ENCODE measurements at regions of chr11 and their contacts with region 1.

Region 1: GRCh38 chr11:10540923-10541560 is at the start of gene RNF141:
- DNase-seq: peak; percentile 96
- ATAC-seq: peak; percentile 97
- H3K4me3 Mint-ChIP-seq: peak within 1 kb of the TSS; percentile 90
- H3K27ac Mint-ChIP-seq: peak within 1 kb of the TSS; percentile 79
- H3K4me1 Mint-ChIP-seq: peaks cover 22% of the 10 kb centered on the region
- H3K27me3 Mint-ChIP-seq: peaks cover 4% of the 10 kb centered on the region
- total RNA-seq, gene RNF141: 10.7 to 11.6 TPM

Region 2: GRCh38 chr11:10322830-10323792 is 217.9 kb before region 1 on chr11:
- CTCF ChIA-PET with region 1: no interaction called
- POLR2A ChIA-PET with region 1: no interaction called
- DNase-seq: peak; percentile 50
- ATAC-seq: peak; percentile 71
- H3K4me3 Mint-ChIP-seq: no peak overlapping the region
- H3K27ac Mint-ChIP-seq: no peak overlapping the region
- H3K4me1 Mint-ChIP-seq: peaks cover 6% of the 10 kb centered on the region
- H3K27me3 Mint-ChIP-seq: peaks cover 8% of the 10 kb centered on the region

Region 3: DNA sequence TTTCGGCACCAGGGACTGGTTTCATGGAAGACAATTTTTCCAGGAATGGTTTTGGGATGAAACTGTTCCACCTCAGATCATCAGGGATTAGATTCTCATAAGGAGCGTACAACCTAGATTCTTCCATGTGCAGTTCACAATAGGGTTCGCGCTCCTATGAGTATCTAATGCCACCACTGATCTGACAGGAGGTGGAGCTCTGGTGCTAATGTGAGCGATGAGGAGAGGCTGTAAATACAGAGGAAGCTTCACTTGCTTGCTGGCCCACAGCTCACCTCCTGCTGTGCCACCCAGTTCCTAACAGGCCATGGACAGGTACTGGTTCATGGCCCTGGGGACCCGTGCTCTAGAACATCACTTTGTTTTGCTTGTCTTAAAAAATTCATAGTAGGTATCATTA is 127.8 kb before region 1 on chr11:
- CTCF ChIA-PET with region 1: interaction called, 67 read pairs
- POLR2A ChIA-PET with region 1: interaction called, 5 read pairs
- DNase-seq: peak; percentile 81
- ATAC-seq: peak; percentile 91
- H3K4me3 Mint-ChIP-seq: no peak overlapping the region
- H3K27ac Mint-ChIP-seq: no peak overlapping the region
- H3K4me1 Mint-ChIP-seq: peaks cover 41% of the 10 kb centered on the region
- H3K27me3 Mint-ChIP-seq: peaks cover 12% of the 10 kb centered on the region

Region 4: DNA sequence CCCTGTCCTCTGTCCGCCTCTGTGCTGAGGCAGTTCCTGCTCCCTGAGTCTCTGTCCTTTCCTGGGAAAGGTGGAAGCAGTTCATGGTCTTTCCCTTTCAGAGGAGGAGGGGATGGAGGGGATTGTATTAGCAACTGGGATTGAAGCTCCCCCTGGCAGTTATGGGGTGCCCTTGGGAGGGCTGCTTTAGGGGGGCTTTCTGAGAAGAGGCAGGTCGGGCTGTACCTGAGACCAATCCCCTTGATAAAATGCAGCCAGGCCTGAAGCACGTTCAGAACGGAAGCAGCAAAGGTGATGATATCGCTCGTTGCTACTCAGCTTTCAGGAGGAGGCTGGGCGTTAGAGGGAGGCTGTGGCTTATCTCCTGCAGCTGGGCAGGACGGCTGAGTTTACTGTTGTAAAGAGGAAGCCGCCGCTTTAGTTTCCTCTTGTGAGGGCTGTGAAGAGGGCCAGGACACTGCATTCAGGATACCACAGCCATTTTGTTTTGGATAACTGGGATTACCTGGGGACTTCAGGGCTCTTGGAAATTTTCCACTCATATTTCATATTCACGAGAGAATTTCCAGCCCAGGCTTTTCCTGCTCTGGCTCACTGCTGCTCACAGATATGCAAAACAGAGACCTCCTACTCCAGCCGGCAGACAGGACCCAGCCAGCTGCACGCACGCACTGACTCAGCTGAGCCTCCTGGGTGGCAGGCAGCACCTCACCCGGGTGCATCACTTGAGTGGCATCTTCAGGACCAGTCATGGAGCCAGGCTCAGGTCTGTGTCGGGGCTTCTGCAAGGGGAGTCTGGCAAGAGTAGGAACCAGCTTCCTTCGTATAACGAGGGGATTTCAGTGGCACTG is 85.2 kb before region 1 on chr11:
- CTCF ChIA-PET with region 1: interaction called, 59 read pairs
- POLR2A ChIA-PET with region 1: interaction called, 29 read pairs
- DNase-seq: peak; percentile 88
- ATAC-seq: peak; percentile 83
- H3K4me3 Mint-ChIP-seq: peak overlapping the region; percentile 85
- H3K27ac Mint-ChIP-seq: peak overlapping the region; percentile 92
- H3K4me1 Mint-ChIP-seq: peaks cover 67% of the 10 kb centered on the region
- H3K27me3 Mint-ChIP-seq: peaks cover 17% of the 10 kb centered on the region

Region 5: DNA sequence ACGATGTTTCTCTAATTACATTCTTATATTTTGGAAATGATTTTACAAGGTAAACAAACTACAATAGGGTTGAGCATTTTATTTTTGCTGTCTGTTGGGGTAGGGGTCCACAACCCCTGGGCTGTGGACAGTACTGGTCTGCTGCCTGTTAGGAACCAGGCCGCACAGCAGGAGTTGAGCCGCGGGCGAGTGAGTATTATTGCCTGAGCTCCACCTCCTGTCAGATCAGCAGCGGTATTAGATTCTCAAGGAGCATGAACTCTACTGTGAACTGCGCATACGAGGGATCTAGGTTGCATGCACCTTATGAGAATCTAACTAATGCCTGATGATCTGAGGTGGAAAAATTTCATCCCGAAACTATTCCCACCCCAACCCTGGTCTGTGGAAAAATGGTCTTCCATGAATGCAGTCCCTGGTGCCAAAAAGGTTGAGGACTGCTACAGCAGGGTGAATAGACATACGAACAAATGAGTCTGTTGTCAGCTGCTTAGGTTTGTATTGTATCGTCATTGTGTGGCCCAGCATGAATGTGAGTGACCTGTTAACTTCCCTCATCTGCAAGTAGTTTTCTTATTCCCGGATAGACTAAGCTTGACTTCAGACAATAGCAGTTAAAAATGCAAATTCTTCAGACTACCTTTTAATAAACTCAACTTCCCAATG is 29.9 kb before region 1 on chr11:
- CTCF ChIA-PET with region 1: interaction called, 18 read pairs
- POLR2A ChIA-PET with region 1: no interaction called
- DNase-seq: no peak
- ATAC-seq: no peak
- H3K4me3 Mint-ChIP-seq: no peak overlapping the region
- H3K27ac Mint-ChIP-seq: no peak overlapping the region
- H3K4me1 Mint-ChIP-seq: peaks cover 10% of the 10 kb centered on the region
- H3K27me3 Mint-ChIP-seq: no peaks in the 10 kb centered on the region

Region 6: GRCh38 chr11:10526974-10527918 is 13.8 kb before region 1 on chr11:
- CTCF ChIA-PET with region 1: interaction called, 45 read pairs
- POLR2A ChIA-PET with region 1: interaction called, 4 read pairs
- DNase-seq: no peak
- ATAC-seq: peak; percentile 49
- H3K4me3 Mint-ChIP-seq: no peak overlapping the region
- H3K27ac Mint-ChIP-seq: no peak overlapping the region
- H3K4me1 Mint-ChIP-seq: peaks cover 11% of the 10 kb centered on the region
- H3K27me3 Mint-ChIP-seq: no peaks in the 10 kb centered on the region

Region 7: DNA sequence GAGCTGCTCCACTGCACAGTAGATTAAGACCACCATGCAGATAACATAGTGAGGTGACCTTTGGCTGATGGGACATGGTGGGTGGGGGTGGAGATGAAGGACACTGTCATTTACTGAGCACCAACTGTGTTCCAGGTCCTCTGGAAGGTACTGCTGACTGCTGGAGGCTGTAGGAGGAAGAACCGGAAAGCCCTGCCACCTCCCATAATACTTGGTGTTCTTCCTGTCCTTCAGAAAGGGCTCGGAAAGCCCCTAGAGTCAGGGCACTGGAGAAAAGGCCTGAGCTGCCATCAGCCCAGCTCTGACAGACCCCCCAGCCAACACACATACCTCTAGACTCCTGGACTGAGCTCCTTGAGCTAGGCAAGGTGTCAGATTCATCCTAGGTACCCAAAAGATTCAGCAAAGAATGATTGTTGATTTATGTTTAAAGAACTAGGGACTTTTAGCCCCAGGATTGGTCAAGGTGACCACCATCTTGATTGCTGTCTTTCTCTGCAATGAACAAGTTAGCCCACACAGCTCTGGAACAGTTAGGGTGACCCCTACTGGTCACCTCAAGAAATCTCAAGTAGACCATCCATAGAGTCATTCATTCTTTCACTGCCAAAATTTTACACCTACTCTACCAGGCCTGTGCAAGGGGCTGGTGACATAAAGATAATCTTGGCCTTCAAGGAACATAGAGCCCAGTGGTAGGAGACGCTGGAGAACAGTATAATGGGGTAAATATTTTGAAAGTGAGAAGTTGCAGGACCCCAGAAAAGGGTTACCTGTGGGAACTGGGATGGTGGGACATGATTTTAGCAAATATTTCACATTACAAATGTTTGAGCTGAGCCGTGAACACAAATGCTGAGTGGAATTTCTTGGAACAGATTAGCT is 113.1 kb after region 1 on chr11:
- CTCF ChIA-PET with region 1: interaction called, 18 read pairs
- POLR2A ChIA-PET with region 1: no interaction called
- DNase-seq: peak; percentile 59
- ATAC-seq: peak; percentile 72
- H3K4me3 Mint-ChIP-seq: no peak overlapping the region
- H3K27ac Mint-ChIP-seq: no peak overlapping the region
- H3K4me1 Mint-ChIP-seq: peaks cover 24% of the 10 kb centered on the region
- H3K27me3 Mint-ChIP-seq: peaks cover 2% of the 10 kb centered on the region

Measured in activated CD8-positive, alpha-beta T cell treated with anti-CD3 and anti-CD28 coated beads, Interleukin-2, amount 10 ng/mL, durations not matched to agents 7 days and 5 days (primary cell).